Sigmoid colon (tissue), 7 donors: ENCODE measurements at regions of chr6 and their contacts with region 1.

Region 1: GRCh38 chr6:42043787-42044475 is 6.4 kb upstream of the TAF8 start:
- DNase-seq: peak; percentile 92
- H3K4me3 ChIP-seq: peak overlapping the region in 2 of 4 donors; percentile 7 to 20
- H3K27ac ChIP-seq: peak overlapping the region; percentile 79 to 96 (median 93)
- H3K4me1 ChIP-seq: peaks cover 0 to 85% (median 83%) of the 10 kb centered on the region in 4 donors
- H3K27me3 ChIP-seq: no peaks in the 10 kb centered on the region
- CTCF ChIP-seq: peak; percentile 93 to 99 (median 96)
- EP300 ChIP-seq: no peak
- POLR2A ChIP-seq: no peak

Region 2: DNA sequence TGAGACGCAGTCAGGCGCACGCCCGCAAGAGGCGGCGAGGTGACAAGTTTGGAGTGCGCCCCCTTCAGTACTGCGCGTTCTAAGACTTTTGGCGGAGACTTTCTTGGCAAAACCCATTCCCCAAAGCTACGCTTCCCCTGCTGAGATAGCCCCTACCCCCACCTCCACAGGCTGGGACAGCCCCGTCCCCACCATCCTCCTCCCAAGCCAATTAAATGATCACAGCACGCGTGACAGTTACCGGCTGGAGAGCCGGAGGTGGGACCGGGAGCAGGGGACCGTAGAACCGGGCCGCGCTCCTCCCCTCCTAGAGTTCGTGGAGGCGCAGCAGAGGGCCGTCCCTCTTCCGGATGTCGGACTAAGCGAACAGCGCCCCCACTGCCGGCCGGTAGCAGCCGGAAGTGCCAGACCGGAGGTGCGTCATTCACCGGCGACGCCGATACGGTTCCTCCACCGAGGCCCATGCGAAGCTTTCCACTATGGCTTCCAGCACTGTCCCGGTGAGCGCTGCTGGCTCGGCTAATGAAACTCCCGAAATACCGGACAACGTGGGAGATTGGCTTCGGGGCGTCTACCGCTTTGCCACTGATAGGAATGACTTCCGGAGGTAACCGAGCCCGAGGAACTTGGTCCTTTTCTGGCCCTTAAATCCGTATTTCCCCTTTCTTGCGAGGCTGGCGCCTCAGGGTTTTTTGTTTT is 256.6 kb before region 1 on chr6 and contains the start of gene TOMM6:
- intact Hi-C with region 1: loop called (anchors 2 kb)
- DNase-seq: peak; percentile 97
- H3K4me3 ChIP-seq: peak within 1 kb of the TSS; percentile 68 to 89 (median 83)
- H3K27ac ChIP-seq: peak within 1 kb of the TSS; percentile 91 to 98 (median 96)
- H3K4me1 ChIP-seq: peaks cover 0 to 32% (median 23%) of the 10 kb centered on the region in 4 donors
- H3K27me3 ChIP-seq: no peaks in the 10 kb centered on the region
- CTCF ChIP-seq: peak; percentile 86 to 98 (median 93)
- EP300 ChIP-seq: peak in 1 of 4 donors; percentile 45
- POLR2A ChIP-seq: peak; percentile 71 to 95
- total RNA-seq, gene TOMM6: 116 to 154 (median 151) TPM

Region 3: DNA sequence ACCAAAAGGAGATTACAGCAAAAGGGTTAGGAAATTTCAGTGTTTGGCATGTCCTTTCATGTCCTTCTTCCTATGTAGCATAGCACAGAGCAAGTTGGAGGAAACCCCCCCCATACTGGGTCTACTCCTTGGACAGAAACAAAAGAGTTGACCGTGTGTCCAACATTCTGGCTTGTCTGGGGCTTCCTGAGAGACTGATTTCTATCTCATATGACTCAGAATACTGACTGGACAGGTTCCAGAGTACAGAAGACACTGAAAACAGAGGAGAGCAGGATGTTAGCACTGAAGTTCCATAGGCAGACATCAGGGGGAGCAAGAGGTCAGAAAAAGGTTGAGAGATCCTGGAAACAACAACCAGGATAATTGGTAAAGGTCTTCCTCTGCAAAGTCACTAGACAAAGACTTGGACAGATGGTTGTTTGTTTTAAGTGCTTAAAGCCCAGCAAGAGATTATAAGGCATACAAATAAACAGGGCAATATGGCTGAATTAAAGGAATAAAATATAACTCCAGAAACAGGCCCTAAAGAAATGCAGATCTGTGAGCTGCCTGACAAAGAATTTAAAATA is 197.2 kb before region 1 on chr6:
- intact Hi-C with region 1: loop called (anchors 1 kb)
- DNase-seq: peak; percentile 69
- H3K4me3 ChIP-seq: no peak overlapping the region
- H3K27ac ChIP-seq: peak overlapping the region in 3 of 4 donors; percentile 35 to 61 (median 54)
- H3K4me1 ChIP-seq: peaks cover 0 to 11% (median 6%) of the 10 kb centered on the region in 4 donors
- H3K27me3 ChIP-seq: no peaks in the 10 kb centered on the region
- CTCF ChIP-seq: peak; percentile 47 to 78 (median 76)
- EP300 ChIP-seq: no peak
- POLR2A ChIP-seq: no peak

Region 4: DNA sequence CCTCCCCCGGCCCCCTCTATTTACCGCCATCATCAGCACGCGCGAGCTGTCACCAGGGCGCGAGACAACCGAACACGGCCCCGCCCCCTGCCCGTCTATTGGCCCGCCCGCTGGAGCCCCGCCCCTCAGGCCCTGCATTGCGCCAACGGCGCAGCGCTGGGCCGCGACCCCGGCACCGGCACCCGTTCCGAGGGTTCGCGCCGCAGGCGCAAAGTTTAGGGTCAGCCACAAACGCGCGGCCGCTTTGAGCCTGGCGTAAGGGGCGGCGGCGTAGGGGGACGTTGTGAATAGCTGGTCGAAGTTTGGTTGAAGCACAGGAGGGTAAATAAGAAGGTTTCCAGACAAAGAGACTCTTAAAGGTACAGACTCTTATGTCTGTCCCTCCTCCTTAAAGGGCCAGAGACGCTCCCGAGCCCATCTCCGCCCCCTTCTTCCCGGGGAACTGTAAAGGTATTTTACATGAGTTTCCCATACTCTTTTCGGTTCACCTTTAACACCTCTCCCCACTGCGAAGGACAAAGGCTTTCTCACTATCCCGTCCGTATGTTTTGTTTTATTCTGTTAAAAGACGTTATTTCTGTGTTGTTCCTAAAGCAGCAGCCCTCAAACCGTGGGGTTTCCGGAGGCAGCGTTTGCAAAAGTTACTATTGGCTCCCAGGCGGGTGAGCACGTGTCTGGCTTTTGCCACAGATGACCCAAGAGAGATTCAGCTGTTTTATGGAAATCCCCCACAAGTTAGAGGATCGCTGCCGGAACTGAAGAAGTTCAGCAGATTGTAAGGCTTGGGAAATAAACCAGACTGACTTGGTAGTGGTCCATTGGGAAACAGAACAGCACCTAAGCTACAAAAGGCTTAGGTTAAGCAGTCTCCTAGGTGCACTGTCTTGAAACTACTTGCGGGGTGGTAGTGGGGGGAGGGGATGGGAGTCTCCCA is 148.4 kb before region 1 on chr6 and contains the start of gene USP49:
- intact Hi-C with region 1: loop called (anchors 2 kb)
- DNase-seq: peak; percentile 94
- H3K4me3 ChIP-seq: peak within 1 kb of the TSS; percentile 58 to 79 (median 75)
- H3K27ac ChIP-seq: peak within 1 kb of the TSS; percentile 81 to 89 (median 84)
- H3K4me1 ChIP-seq: peaks cover 0 to 20% (median 12%) of the 10 kb centered on the region in 4 donors
- H3K27me3 ChIP-seq: no peaks in the 10 kb centered on the region
- CTCF ChIP-seq: no peak
- EP300 ChIP-seq: no peak
- POLR2A ChIP-seq: no peak
- total RNA-seq, gene USP49: 2.1 to 10.0 (median 3.1) TPM

Region 5: DNA sequence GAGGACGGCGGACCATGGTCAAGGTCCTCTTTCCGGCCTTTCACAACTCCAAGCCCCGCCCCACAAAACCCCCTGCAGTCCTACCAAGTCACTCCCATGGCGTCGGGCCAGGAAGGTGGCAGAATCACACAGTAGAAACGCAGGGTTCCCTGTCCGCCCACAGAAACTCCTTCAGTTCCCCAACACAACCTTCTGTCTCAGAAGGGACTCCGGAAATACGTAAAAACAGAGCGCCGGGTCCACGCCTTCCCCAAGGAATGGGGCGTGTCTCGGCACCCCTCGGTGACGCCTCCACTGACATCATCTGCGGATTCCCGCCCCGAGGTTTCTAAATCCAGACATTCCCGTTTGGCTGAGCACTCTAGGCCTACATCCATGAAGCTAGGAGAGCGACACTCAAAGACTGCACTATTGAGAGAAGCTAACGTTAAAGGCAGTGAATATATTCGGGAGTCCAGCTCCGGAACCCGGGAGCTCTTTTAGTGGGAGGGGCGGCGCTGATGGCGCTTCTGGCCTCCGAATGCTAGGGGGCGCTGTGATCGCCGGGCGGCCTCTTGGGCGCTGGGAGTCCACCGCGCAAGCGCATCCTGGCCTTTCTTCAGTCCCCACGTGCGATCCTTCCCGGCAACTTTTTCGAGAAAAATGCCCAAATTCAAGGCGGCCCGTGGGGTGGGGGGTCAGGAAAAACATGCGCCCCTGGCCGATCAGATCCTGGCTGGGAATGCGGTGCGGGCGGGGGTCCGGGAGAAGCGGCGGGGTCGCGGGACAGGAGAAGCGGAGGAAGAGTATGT is 122.8 kb before region 1 on chr6 and contains the starts of genes BYSL and MED20:
- intact Hi-C with region 1: loop called (anchors 2 kb)
- DNase-seq: peak; percentile 96
- H3K4me3 ChIP-seq: peak within 1 kb of the TSS; percentile 62 to 84 (median 74)
- H3K27ac ChIP-seq: peak within 1 kb of the TSS; percentile 94 to 97 (median 96)
- H3K4me1 ChIP-seq: peaks cover 0 to 46% (median 36%) of the 10 kb centered on the region in 4 donors
- H3K27me3 ChIP-seq: no peaks in the 10 kb centered on the region
- CTCF ChIP-seq: peak; percentile 89 to 98 (median 94)
- EP300 ChIP-seq: peak in 1 of 4 donors; percentile 49
- POLR2A ChIP-seq: peak; percentile 80 to 84
- total RNA-seq, gene BYSL: 2.9 to 5.4 (median 4.6) TPM
- total RNA-seq, gene MED20: 9.9 to 15.5 (median 13.7) TPM

Region 6: GRCh38 chr6:41941280-41942066 is 102.5 kb before region 1 on chr6 and contains the start of gene CCND3:
- intact Hi-C with region 1: loop called (anchors 2 kb)
- DNase-seq: peak; percentile 94
- H3K4me3 ChIP-seq: peak within 1 kb of the TSS; percentile 56 to 82 (median 66)
- H3K27ac ChIP-seq: peak within 1 kb of the TSS; percentile 86 to 94 (median 89)
- H3K4me1 ChIP-seq: peaks cover 0 to 53% (median 48%) of the 10 kb centered on the region in 4 donors
- H3K27me3 ChIP-seq: no peaks in the 10 kb centered on the region
- CTCF ChIP-seq: no peak
- EP300 ChIP-seq: no peak
- POLR2A ChIP-seq: no peak
- total RNA-seq, gene CCND3: 75.1 to 125 (median 110) TPM

Region 7: DNA sequence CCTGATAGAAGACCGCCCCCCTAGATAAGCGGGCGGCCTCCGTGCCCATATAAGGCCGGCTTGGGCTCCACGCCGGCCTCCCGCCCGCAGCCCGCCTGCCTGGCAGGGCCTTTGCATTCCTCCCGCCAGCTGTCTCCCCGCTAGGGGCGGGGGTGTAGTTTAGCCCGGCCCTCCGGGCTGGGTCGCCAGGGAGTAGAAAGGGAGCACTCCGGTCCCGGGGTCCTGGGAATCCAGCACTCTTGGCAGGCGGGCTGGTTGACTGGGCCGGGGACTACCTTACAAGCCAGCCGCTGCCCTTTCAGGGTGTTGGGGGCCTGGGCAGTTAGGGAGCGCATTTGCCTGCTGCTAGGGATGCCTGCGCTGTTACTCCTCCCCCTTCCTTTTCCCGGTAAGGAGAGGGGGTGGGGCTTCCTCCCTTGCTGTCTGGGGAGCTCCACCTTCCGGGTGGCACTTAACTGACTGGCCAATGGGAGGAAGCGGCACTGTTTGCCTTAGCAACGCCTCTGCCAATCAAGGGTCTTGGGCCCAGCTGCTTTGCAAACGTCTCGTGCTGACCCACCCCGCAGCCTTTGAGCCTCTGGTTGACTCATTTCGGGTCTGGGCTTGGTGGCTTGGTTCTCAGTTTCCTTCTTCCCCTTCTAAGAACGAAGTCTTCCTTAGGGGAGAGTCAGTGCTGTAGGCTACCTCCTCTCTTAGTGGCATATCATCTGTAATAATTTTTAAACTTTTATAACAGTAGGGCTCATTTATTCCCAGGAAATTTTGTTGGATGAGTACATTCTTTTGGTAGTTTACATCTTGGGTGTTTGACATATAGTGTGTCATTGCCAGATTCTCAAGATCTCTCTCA is 1130.6 kb after region 1 on chr6:
- intact Hi-C with region 1: loop called (anchors 5 kb)
- DNase-seq: peak; percentile 99
- H3K4me3 ChIP-seq: peak overlapping the region; percentile 88 to 98 (median 95)
- H3K27ac ChIP-seq: peak overlapping the region; percentile 99 to 100 (median 100)
- H3K4me1 ChIP-seq: peaks cover 0 to 52% (median 49%) of the 10 kb centered on the region in 4 donors
- H3K27me3 ChIP-seq: no peaks in the 10 kb centered on the region
- CTCF ChIP-seq: no peak
- EP300 ChIP-seq: peak in 2 of 4 donors; percentile 24 to 33
- POLR2A ChIP-seq: peak in 1 of 2 donors; percentile 63